Activated T-helper 2 cell treated with anti-CD3 and anti-CD28 coated beads, Interferon-gamma antibody, Interleukin-2, Interleukin-4, amounts not matched to agents 10 μg/mL and 5 μg/mL and 100 μg/mL, durations not matched to agents 14 hours and 24 hours and 36 hours (primary cell): ENCODE measurements at regions of chr15 and their contacts with region 1.

Region 1: GRCh38 chr15:43903864-43904290 is 77.1 kb downstream of the WDR76 start:
- DNase-seq: peak; percentile 41
- H3K4me3 Mint-ChIP-seq: no peak overlapping the region
- H3K27ac Mint-ChIP-seq: no peak overlapping the region
- H3K4me1 Mint-ChIP-seq: peaks cover 2% of the 10 kb centered on the region
- H3K27me3 Mint-ChIP-seq: no peaks in the 10 kb centered on the region

Region 2: DNA sequence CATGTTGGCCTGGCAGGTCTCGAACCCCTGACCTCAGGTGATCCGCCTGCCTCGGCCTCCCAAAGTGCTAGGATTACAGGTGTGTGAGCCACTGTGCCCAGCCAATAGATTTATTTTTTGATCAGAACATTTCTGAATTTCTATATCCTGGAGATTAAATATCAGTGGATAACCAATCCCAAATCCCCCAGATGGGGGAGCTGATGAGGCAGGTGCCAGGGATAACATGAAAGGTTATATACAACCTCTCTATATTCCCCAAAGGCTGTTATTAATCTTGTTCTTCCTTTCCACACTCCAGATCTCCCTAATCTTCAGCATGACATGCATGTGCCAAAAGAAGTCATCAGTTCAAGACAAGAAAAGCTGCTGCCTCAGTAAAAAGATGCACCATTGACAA is 35.2 kb after region 1 on chr15:
- intact Hi-C with region 1: no loop called
- DNase-seq: no peak
- H3K4me3 Mint-ChIP-seq: no peak overlapping the region
- H3K27ac Mint-ChIP-seq: no peak overlapping the region
- H3K4me1 Mint-ChIP-seq: no peaks in the 10 kb centered on the region
- H3K27me3 Mint-ChIP-seq: peaks cover 13% of the 10 kb centered on the region

Region 3: DNA sequence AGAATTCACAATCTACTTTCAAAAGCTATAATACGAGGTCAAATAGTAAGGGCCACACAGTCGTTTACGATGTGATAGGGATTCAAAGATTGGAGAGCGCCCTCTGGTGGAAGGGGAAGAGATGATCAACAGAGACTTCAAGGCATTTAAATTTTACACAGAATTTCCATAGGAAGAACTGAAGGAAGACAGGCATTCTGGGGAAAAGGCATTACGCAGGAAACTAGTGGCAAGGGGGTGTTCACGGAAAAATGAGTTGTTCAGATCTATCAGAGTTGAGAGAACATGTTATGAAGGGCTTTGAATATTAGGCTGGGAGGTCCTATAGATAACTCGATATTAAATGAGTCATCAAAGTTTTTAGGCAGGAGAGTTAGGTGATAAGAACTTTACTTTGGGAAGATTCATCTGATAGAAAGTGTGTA is 162.5 kb after region 1 on chr15:
- intact Hi-C with region 1: loop called (anchors 1 kb)
- DNase-seq: peak; percentile 33
- H3K4me3 Mint-ChIP-seq: no peak overlapping the region
- H3K27ac Mint-ChIP-seq: no peak overlapping the region
- H3K4me1 Mint-ChIP-seq: peaks cover 4% of the 10 kb centered on the region
- H3K27me3 Mint-ChIP-seq: peaks cover 33% of the 10 kb centered on the region

Region 4: DNA sequence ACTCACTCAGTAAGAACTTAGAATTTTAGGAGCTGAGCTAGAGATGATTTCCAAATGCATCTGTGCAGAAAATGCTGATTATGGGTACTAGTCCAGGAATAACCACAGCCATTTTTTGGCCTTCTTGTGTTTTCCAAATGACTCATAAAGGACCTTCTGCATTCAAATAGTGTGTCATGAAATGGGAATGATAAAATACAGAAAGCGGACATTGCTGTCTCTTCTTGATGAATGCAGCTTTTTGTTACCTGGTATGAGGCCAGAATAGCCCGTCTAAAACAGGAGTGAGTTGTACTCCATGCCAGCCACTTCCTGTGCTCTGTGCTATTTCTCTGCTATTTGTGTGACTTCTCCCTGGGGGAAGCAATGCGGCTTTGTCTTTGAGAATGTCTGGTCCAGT is 311.7 kb after region 1 on chr15:
- intact Hi-C with region 1: loop called (anchors 10 kb)
- DNase-seq: no peak
- H3K4me3 Mint-ChIP-seq: no peak overlapping the region
- H3K27ac Mint-ChIP-seq: no peak overlapping the region
- H3K4me1 Mint-ChIP-seq: peaks cover 2% of the 10 kb centered on the region
- H3K27me3 Mint-ChIP-seq: peaks cover 21% of the 10 kb centered on the region